ENCODE measurements at regions of chr2 and their contacts with region 1.

Region 1: GRCh38 chr2:207473049-207473930 is 56.5 kb upstream of the CREB1 start:
- DNase-seq: no peak
- H3K4me3 ChIP-seq: peak overlapping the region in 3 of 4 donors; percentile 12 to 34 (median 25)
- H3K27ac ChIP-seq: peak overlapping the region in 3 of 4 donors; percentile 20 to 69 (median 52)
- H3K4me1 ChIP-seq: peaks cover 0 to 11% (median 8%) of the 10 kb centered on the region in 4 donors
- H3K27me3 ChIP-seq: no peaks in the 10 kb centered on the region
- CTCF ChIP-seq: peak; percentile 21 to 53 (median 42)
- EP300 ChIP-seq: peak in 1 of 4 donors; percentile 17
- POLR2A ChIP-seq: no peak

Region 2: GRCh38 chr2:206693399-206694137 is 779.7 kb before region 1 on chr2:
- intact Hi-C with region 1: loop called (anchors 2 kb)
- DNase-seq: no peak
- H3K4me3 ChIP-seq: no peak overlapping the region
- H3K27ac ChIP-seq: no peak overlapping the region
- H3K4me1 ChIP-seq: no peaks in the 10 kb centered on the region
- H3K27me3 ChIP-seq: no peaks in the 10 kb centered on the region
- CTCF ChIP-seq: peak in 3 of 4 experiments; percentile 54 to 65 (median 54)
- EP300 ChIP-seq: no peak
- POLR2A ChIP-seq: no peak

Region 3: GRCh38 chr2:206800506-206801417 is 672.5 kb before region 1 on chr2:
- intact Hi-C with region 1: loop called (anchors 1 kb)
- DNase-seq: peak; percentile 83
- H3K4me3 ChIP-seq: no peak overlapping the region
- H3K27ac ChIP-seq: peak overlapping the region in 2 of 4 donors; percentile 4 to 44
- H3K4me1 ChIP-seq: peaks cover 0 to 15% (median 8%) of the 10 kb centered on the region in 4 donors
- H3K27me3 ChIP-seq: no peaks in the 10 kb centered on the region
- CTCF ChIP-seq: peak; percentile 40 to 66 (median 56)
- EP300 ChIP-seq: no peak
- POLR2A ChIP-seq: no peak

Region 4: GRCh38 chr2:206981739-206982340 is 491.4 kb before region 1 on chr2:
- intact Hi-C with region 1: loop called (anchors 1 kb)
- DNase-seq: peak; percentile 88
- H3K4me3 ChIP-seq: no peak overlapping the region
- H3K27ac ChIP-seq: peak overlapping the region in 1 of 4 donors; percentile 32
- H3K4me1 ChIP-seq: peaks cover 0 to 32% (median 18%) of the 10 kb centered on the region in 4 donors
- H3K27me3 ChIP-seq: no peaks in the 10 kb centered on the region
- CTCF ChIP-seq: peak; percentile 60 to 85 (median 82)
- EP300 ChIP-seq: peak in 1 of 4 donors; percentile 9
- POLR2A ChIP-seq: no peak

Region 5: GRCh38 chr2:207046724-207047123 is 426.6 kb before region 1 on chr2:
- intact Hi-C with region 1: loop called (anchors 5 kb)
- DNase-seq: no peak
- H3K4me3 ChIP-seq: no peak overlapping the region
- H3K27ac ChIP-seq: no peak overlapping the region
- H3K4me1 ChIP-seq: no peaks in the 10 kb centered on the region
- H3K27me3 ChIP-seq: no peaks in the 10 kb centered on the region
- CTCF ChIP-seq: no peak
- EP300 ChIP-seq: no peak
- POLR2A ChIP-seq: no peak